ENCODE measurements at regions of chr20 and their contacts with region 1.

Region 1: DNA sequence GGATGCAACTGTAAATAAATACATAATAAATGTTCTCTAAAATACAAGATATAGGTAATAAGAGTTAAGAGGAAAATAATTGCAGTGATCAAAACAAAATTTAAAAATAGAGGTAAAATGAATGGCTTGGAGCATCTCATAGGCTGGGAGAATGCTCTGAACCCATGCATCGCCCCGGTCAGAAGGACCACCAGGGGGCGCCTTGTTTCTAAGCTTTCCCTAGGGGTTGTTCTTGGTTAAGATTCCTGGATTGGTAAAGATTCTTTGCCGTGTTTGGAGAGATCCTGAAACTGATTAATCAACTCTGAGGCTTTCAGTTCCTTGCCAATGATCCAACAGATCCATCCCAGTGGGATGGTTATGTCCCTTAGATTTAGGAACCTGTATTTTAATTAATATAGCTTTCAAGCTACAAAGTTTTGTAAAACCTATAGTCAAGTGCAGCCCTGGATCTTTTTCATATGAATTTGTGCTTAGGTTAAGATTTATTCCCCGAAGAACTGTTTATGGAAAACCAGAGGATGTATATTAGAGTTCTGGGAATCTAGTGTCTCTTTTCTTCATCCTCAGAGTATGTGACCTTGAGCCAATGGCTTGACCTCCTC is 45.3 kb upstream of the PRELID3B start:
- DNase-seq: no peak
- H3K4me3 ChIP-seq: no peak overlapping the region
- CTCF ChIP-seq: peak; percentile 81

Region 2: GRCh38 chr20:58716644-58717510 is 371.1 kb before region 1 on chr20:
- CTCF ChIA-PET with region 1: no interaction called
- POLR2A ChIA-PET with region 1: no interaction called
- DNase-seq: no peak
- H3K4me3 ChIP-seq: no peak overlapping the region
- CTCF ChIP-seq: no peak

Region 3: DNA sequence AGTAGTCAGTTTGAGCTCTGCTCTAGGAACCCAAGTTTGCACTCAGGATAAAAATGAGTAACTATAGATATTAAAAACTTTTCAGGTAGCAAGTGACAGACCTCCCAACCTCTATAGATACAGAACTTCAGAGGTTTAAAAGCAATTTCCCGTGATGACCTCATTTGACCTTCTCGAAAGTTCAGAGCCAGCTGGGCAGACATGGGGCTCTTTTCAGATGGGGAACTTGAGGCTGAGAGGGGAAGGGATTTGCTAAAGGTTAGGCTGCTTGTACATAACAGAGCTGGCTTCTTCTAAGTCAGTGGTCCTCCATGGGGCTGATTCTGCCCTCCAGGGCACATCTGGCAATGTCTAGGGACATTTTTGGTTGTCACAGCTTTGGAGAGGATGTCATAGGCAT is 16.9 kb after region 1 on chr20:
- CTCF ChIA-PET with region 1: interaction called, 35 read pairs
- POLR2A ChIA-PET with region 1: no interaction called
- DNase-seq: no peak
- H3K4me3 ChIP-seq: no peak overlapping the region
- CTCF ChIP-seq: no peak

Region 4: GRCh38 chr20:59112978-59113377 is 25.0 kb after region 1 on chr20:
- CTCF ChIA-PET with region 1: interaction called, 14 read pairs
- POLR2A ChIA-PET with region 1: no interaction called
- DNase-seq: no peak
- H3K4me3 ChIP-seq: no peak overlapping the region
- CTCF ChIP-seq: no peak

Region 5: DNA sequence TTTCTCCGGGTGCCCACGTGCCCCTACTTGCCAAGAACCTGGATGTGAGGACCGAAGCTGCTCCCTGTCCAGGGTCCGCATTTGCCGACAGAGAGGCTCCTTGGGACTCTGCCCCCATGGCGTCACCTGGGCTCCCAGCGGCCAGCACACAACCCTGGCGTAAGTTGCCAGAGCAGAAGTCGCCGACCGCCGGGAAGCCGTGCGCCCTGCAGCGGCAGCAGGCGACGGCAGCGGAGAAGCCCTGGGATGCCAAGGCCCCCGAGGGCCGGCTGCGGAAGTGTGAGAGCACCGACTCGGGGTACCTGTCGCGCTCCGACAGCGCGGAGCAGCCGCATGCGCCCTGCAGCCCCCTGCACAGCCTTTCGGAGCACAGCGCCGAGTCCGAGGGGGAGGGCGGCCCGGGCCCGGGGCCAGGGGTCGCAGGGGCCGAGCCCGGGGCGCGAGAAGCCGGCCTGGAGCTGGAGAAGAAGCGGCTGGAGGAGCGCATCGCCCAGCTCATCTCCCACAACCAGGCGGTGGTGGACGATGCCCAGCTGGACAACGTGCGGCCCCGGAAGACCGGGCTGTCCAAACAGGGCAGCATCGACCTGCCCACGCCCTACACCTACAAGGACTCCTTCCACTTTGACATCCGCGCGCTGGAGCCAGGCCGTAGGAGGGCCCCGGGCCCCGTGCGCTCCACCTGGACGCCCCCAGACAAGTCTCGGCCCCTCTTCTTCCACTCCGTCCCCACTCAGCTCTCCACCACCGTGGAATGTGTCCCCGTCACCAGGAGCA is 104.0 kb after region 1 on chr20:
- CTCF ChIA-PET with region 1: no interaction called
- POLR2A ChIA-PET with region 1: no interaction called
- DNase-seq: no peak
- H3K4me3 ChIP-seq: no peak overlapping the region
- CTCF ChIP-seq: no peak

Measured in AG04449 (cell line).